Tibial artery (tissue), 4 donors: ENCODE measurements at regions of chr5 and their contacts with region 1.

Region 1: DNA sequence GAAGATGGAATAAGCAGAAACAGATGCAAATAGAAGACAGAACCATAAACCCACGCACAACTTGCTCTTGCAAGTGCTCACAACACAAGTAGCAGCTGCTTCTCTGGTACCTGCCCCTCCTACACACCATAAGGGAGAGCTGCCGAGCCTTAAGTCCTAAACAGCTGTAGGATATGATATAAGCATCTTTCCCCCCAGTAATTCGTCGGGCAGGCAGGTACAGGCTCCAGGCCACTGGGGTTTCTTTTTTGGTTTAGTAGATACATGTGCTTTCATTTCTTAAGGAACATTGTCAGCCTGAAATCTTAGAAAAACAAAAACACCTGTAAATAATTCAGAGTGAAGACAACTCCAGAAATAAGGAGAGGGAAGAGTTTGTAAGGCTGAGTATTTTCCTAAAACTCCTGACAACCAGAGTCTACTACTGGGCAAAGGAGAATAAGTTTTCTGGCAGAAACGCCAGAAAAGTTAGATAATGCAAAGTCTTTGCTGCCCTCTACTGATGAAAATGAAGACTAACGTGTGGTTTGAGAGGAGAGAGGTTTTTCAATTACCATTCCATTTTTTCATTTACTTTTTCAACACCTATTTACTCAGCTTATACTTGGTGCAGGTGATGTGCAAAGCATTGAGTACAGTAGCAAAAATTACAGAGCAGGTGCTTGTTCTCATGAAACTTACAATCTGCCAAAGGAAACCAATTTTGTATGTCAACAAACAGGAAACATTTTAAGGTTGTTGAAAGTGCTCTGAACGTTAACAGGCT is 20.1 kb upstream of the TCERG1 start:
- DNase-seq: no peak
- H3K4me3 ChIP-seq: no peak overlapping the region
- H3K27ac ChIP-seq: no peak overlapping the region
- H3K4me1 ChIP-seq: no peaks in the 10 kb centered on the region
- H3K27me3 ChIP-seq: peaks cover 0 to 18% of the 10 kb centered on the region in 2 donors
- CTCF ChIP-seq: peak; percentile 68 to 74

Region 2: GRCh38 chr5:146188358-146188757 is 238.7 kb before region 1 on chr5:
- intact Hi-C with region 1: loop called (anchors 10 kb)
- DNase-seq: no peak
- H3K4me3 ChIP-seq: no peak overlapping the region
- H3K27ac ChIP-seq: no peak overlapping the region
- H3K4me1 ChIP-seq: peaks cover 0 to under 1% (median 0%) of the 10 kb centered on the region in 4 donors
- H3K27me3 ChIP-seq: no peaks in the 10 kb centered on the region
- CTCF ChIP-seq: no peak

Region 3: GRCh38 chr5:146291421-146292074 is 135.5 kb before region 1 on chr5:
- intact Hi-C with region 1: loop called (anchors 10 kb)
- DNase-seq: no peak
- H3K4me3 ChIP-seq: no peak overlapping the region
- H3K27ac ChIP-seq: no peak overlapping the region
- H3K4me1 ChIP-seq: peaks cover 0 to 7% (median 0%) of the 10 kb centered on the region in 4 donors
- H3K27me3 ChIP-seq: no peaks in the 10 kb centered on the region
- CTCF ChIP-seq: peak; percentile 41